ENCODE measurements at regions of chr14 and their contacts with region 1.

Region 1: DNA sequence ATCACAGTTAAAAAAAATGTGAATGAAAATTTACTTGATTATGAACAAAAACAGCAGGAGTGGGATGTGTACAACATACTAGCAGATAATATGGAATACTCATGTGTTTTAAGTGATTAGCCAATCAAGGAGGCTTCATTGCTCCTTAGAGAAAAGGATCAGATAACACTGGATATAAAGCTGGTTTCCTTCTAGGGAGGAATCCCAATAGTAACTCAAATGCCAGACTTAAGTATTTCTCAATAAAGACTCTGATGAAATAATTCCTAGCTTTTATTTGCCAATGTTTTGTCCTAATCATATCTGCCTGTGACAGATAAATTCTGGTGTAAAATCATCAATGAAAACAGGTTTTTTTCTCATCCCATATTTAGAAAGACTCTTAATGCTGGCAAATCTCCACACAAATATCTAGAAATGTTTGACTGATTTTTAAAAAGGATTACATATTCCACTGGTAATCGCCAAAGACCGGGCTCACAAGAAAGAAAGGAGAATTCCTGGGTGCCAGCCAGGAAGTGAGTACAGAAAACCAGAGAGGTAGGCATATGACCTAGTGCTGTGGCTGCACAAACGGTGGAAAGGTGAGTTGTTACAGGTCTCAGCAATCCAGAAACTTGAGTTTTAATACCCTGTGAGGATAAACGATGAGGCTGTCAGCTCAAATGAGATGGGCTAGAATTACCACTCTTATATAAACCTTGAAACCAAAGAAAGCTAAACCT is 108.6 kb upstream of the TTC7B start:
- DNase-seq: no peak
- ATAC-seq: no peak
- H3K4me3 ChIP-seq: no peak overlapping the region
- H3K4me3 Mint-ChIP-seq: no peak overlapping the region
- H3K27ac ChIP-seq: no peak overlapping the region
- H3K27ac Mint-ChIP-seq: no peak overlapping the region
- H3K4me1 ChIP-seq: no peaks in the 10 kb centered on the region
- H3K4me1 Mint-ChIP-seq: no peaks in the 10 kb centered on the region
- H3K27me3 ChIP-seq: no peaks in the 10 kb centered on the region
- H3K27me3 Mint-ChIP-seq: no peaks in the 10 kb centered on the region

Region 2: DNA sequence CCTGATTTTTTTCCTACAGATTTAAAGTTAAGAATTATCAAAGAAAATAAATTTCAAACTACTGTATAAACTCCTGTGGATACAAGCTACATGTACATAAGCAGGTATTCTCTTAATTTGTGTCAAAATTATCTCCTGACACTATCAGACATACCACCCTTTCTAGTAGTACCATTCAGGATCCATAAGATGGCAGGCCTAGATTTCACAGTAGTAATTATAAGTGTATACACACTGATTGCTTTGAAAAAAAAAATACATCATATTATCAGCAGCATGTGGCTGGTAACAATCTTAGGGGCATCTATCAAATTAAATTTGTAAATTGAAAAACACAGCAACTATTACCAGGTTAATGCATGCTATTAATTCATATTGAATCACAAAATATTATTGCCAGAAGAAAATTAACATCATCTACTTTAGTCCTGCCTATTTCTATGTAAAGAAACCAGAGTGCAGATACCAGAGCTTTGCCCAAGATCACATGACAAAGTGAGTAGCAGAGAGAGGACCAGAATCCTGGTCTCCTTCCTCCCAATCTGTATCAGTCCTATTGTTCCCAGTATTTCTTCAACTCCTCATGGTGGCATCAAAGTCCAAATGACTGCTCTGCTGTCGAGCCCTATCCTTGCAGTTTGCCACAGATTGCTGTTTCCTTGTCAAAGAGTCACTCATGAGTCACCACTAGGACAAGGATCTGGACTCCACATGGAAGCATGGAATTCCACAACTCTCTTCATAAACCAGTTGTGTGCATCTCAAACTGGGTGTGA is 555.6 kb before region 1 on chr14:
- CTCF ChIA-PET with region 1: no interaction called
- POLR2A ChIA-PET with region 1: no interaction called
- DNase-seq: peak in 1 of 35 experiments; percentile 66
- ATAC-seq: peak; percentile 83 to 99 (median 90)
- H3K4me3 ChIP-seq: no peak overlapping the region
- H3K4me3 Mint-ChIP-seq: no peak overlapping the region
- H3K27ac ChIP-seq: no peak overlapping the region
- H3K27ac Mint-ChIP-seq: no peak overlapping the region
- H3K4me1 ChIP-seq: no peaks in the 10 kb centered on the region
- H3K4me1 Mint-ChIP-seq: peaks cover 0 to 5% (median 3%) of the 10 kb centered on the region in 3 donors
- H3K27me3 ChIP-seq: peaks cover 0 to 6% of the 10 kb centered on the region in 2 experiments
- H3K27me3 Mint-ChIP-seq: no peaks in the 10 kb centered on the region

Region 3: DNA sequence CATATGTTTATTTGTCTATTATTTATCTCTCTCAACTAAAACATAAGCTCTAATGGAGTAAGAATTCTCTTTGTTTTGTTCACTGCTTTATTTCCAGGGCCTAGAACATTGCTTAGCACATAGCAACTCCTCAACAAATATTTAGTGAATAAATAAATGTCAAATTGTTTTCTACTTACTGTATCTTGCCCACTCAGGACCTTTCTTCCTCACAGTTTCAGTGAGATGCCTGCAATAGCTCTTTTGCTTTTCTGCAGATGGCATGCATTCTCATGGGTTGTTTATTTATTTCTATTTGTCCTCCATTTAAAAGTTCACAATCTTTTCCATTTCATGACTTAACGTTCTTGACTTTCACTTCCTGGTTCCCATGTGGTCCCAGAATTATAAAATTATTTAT is 13.7 kb before region 1 on chr14:
- CTCF ChIA-PET with region 1: no interaction called
- POLR2A ChIA-PET with region 1: interaction called in 1 of 2 experiments, 10 read pairs
- DNase-seq: no peak
- ATAC-seq: no peak
- H3K4me3 ChIP-seq: no peak overlapping the region
- H3K4me3 Mint-ChIP-seq: no peak overlapping the region
- H3K27ac ChIP-seq: no peak overlapping the region
- H3K27ac Mint-ChIP-seq: no peak overlapping the region
- H3K4me1 ChIP-seq: no peaks in the 10 kb centered on the region
- H3K4me1 Mint-ChIP-seq: peaks cover 6 to 10% (median 7%) of the 10 kb centered on the region in 3 donors
- H3K27me3 ChIP-seq: no peaks in the 10 kb centered on the region
- H3K27me3 Mint-ChIP-seq: no peaks in the 10 kb centered on the region

Region 4: DNA sequence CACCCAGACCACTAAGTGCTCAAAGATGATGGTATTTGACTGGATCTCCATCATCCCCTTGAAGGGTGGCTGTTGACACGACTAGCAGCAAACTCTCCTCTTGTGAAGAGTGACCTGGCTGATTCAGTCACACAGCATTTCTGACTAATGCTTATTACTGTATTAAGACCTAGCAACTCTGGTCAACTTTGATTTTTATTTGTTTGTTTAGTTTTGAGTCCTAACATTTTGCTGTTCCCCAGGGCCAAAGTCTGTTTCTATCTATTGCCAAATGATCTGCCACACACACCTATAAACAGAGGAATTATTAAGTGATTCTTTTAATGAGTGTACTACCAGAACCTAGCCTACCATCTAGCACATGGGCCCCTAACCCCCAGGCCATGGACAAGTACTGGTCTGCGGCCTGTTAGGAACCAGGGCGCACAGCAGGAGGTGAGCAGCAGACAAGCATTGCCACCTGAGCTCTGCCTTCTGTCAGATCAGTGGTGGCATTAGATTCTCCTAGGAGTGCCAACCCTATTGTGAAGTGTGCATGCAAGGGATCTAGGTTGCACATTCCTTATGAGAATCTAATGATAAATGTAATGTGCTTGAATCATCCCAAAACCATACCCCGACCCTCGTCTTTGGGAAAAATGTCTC is 15.7 kb after region 1 on chr14:
- CTCF ChIA-PET with region 1: no interaction called
- POLR2A ChIA-PET with region 1: no interaction called
- DNase-seq: no peak
- ATAC-seq: no peak
- H3K4me3 ChIP-seq: no peak overlapping the region
- H3K4me3 Mint-ChIP-seq: no peak overlapping the region
- H3K27ac ChIP-seq: no peak overlapping the region
- H3K27ac Mint-ChIP-seq: no peak overlapping the region
- H3K4me1 ChIP-seq: no peaks in the 10 kb centered on the region
- H3K4me1 Mint-ChIP-seq: no peaks in the 10 kb centered on the region
- H3K27me3 ChIP-seq: no peaks in the 10 kb centered on the region
- H3K27me3 Mint-ChIP-seq: no peaks in the 10 kb centered on the region

Measured in T-cell (primary cell).